H1 (cell line): ENCODE measurements at regions of chr5 and their contacts with region 1.

Region 1: DNA sequence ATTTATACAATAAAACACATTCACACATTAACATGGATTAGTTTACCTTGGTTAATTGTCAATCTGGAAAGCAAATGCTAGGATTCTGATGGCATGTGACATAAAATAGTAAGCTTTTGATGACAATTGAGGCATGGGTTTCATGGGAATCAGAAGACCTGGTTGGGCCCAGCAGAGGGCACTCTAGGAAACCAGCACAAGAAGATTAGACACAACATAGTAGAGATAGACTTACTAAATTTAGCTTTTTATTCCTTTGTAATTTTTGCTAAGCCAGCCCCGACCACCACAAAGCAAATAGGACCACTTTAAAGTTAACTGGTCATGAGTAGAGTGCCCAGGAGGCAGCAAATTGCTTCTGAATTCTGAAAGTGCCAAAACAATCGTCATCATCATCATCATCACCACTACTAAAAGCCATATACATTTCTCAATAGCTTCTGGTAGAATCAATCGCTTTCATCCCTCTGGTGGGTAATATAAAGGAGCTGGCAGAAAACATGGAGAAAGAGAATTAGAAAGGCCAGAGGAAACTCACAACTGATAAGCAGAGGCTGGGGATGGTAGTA is 163.2 kb downstream of the ARRDC3 start:
- DNase-seq: no peak
- H3K4me3 ChIP-seq: no peak overlapping the region
- H3K27ac ChIP-seq: no peak overlapping the region
- H3K4me1 ChIP-seq: no peaks in the 10 kb centered on the region
- H3K27me3 ChIP-seq: no peaks in the 10 kb centered on the region
- CTCF ChIP-seq: peak in 2 of 3 experiments; percentile 47 to 59; a peak in 3 of 4 replicates
- EP300 ChIP-seq: no peak
- POLR2A ChIP-seq: no peak
- RAD21 ChIP-seq: peak; percentile 56 to 60

Region 2: GRCh38 chr5:90866333-90866732 is 353.6 kb before region 1 on chr5:
- CTCF ChIA-PET with region 1: interaction called, 25 read pairs
- POLR2A ChIA-PET with region 1: no interaction called
- DNase-seq: no peak
- H3K4me3 ChIP-seq: no peak overlapping the region
- H3K27ac ChIP-seq: no peak overlapping the region
- H3K4me1 ChIP-seq: no peaks in the 10 kb centered on the region; a peak in 1 of 7 replicates
- H3K27me3 ChIP-seq: no peaks in the 10 kb centered on the region
- CTCF ChIP-seq: peak in 1 of 3 experiments; percentile 31; a peak in 2 of 4 replicates
- EP300 ChIP-seq: no peak
- POLR2A ChIP-seq: no peak
- RAD21 ChIP-seq: peak; percentile 57 to 68

Region 3: DNA sequence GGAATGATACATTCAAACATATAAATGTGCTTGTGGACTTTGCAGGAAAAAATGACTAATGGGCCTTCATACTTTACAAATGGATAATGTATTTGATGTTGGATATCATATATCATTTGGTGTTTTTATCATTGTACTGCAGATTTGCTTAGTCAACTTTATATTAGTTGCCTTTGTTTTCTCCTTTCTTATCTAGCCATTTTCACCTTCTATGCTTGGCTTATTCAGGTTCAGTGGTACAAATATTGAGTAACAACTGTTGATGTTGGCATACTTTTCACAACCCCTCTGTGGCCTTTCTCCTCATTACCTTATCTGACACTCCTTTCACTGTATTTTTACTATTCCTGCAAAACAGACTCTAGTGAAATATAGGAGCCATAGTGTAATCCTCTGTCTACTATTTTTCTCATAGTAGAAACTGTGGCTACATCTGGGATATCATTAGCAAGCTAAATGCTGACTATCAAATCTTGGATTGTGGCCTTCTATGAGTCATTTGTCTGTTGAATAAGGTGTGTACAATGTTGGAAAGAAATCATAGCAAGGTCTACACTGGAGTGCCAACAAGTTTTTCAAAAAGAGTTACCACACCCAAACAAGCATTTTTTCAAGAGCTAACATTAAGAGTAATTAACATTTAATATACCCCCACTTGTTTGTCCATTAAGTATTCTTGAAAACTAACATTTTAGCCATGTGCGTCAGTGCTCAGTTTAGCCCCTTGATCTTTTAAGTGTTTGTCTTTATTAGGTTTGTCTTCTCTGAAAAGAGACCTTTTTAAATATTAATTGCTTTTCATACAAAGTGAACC is 331.2 kb before region 1 on chr5:
- CTCF ChIA-PET with region 1: no interaction called
- POLR2A ChIA-PET with region 1: no interaction called
- DNase-seq: no peak
- H3K4me3 ChIP-seq: no peak overlapping the region
- H3K27ac ChIP-seq: no peak overlapping the region
- H3K4me1 ChIP-seq: peaks cover 0 to 4% (median 2%) of the 10 kb centered on the region in 4 experiments; a peak in 3 of 7 replicates
- H3K27me3 ChIP-seq: no peaks in the 10 kb centered on the region
- CTCF ChIP-seq: no peak
- EP300 ChIP-seq: no peak
- POLR2A ChIP-seq: no peak
- RAD21 ChIP-seq: no peak

Region 4: GRCh38 chr5:90932052-90932699 is 287.7 kb before region 1 on chr5:
- CTCF ChIA-PET with region 1: interaction called, 10 read pairs
- POLR2A ChIA-PET with region 1: no interaction called
- DNase-seq: no peak
- H3K4me3 ChIP-seq: no peak overlapping the region
- H3K27ac ChIP-seq: no peak overlapping the region
- H3K4me1 ChIP-seq: peaks cover 0 to 4% (median 0%) of the 10 kb centered on the region in 4 experiments; a peak in 1 of 7 replicates
- H3K27me3 ChIP-seq: no peaks in the 10 kb centered on the region
- CTCF ChIP-seq: peak; percentile 11 to 77 (median 66)
- EP300 ChIP-seq: no peak
- POLR2A ChIP-seq: no peak
- RAD21 ChIP-seq: peak; percentile 85 to 86

Region 5: GRCh38 chr5:91101600-91102379 is 118.1 kb before region 1 on chr5:
- CTCF ChIA-PET with region 1: interaction called, 10 read pairs
- POLR2A ChIA-PET with region 1: no interaction called
- DNase-seq: peak; percentile 53 to 64
- H3K4me3 ChIP-seq: no peak overlapping the region
- H3K27ac ChIP-seq: no peak overlapping the region
- H3K4me1 ChIP-seq: peaks cover 0 to 14% (median 4%) of the 10 kb centered on the region in 4 experiments; a peak in 6 of 7 replicates
- H3K27me3 ChIP-seq: no peaks in the 10 kb centered on the region
- CTCF ChIP-seq: peak; percentile 44 to 78 (median 69)
- EP300 ChIP-seq: no peak
- POLR2A ChIP-seq: no peak
- RAD21 ChIP-seq: peak; percentile 87 to 89

Region 6: GRCh38 chr5:91183737-91184136 is 36.1 kb before region 1 on chr5:
- CTCF ChIA-PET with region 1: interaction called, 22 read pairs
- POLR2A ChIA-PET with region 1: no interaction called
- DNase-seq: peak in 1 of 2 experiments; percentile 9
- H3K4me3 ChIP-seq: no peak overlapping the region
- H3K27ac ChIP-seq: no peak overlapping the region
- H3K4me1 ChIP-seq: peaks cover 0 to 6% (median 2%) of the 10 kb centered on the region in 4 experiments; a peak in 2 of 7 replicates
- H3K27me3 ChIP-seq: no peaks in the 10 kb centered on the region
- CTCF ChIP-seq: no peak
- EP300 ChIP-seq: no peak
- POLR2A ChIP-seq: no peak
- RAD21 ChIP-seq: no peak

Region 7: GRCh38 chr5:91408710-91409109 is 188.8 kb after region 1 on chr5:
- CTCF ChIA-PET with region 1: interaction called, 13 read pairs
- POLR2A ChIA-PET with region 1: no interaction called
- DNase-seq: no peak
- H3K4me3 ChIP-seq: no peak overlapping the region
- H3K27ac ChIP-seq: no peak overlapping the region
- H3K4me1 ChIP-seq: no peaks in the 10 kb centered on the region
- H3K27me3 ChIP-seq: no peaks in the 10 kb centered on the region
- CTCF ChIP-seq: no peak
- EP300 ChIP-seq: no peak
- POLR2A ChIP-seq: no peak
- RAD21 ChIP-seq: no peak